ENCODE measurements at regions of chr7 and their contacts with region 1.

Region 1: DNA sequence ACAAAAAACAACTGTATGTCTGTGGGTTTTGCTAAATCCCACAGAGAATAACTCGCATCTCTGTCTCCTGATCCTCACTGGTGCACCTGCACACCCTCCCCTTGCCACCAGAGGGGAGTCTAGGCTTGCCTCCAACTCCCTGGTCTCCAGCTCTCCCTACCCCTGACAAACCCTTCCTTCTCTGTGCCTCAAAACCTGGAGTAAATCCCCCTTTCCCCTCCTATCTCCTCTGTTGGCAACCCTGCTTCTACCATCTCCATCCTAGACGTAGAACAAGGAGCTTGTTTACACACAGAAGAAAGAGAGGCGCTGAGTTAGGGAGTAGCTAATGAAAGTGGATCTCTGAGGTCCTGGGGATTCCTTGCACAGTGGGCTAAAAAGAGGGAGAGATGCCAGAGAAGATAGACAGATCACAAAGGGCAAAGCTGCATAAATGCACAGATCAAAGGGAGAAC is 6.0 kb downstream of the MBLAC1 start:
- DNase-seq: no peak
- ATAC-seq: peak; percentile 87
- H3K4me3 ChIP-seq: no peak overlapping the region
- H3K27ac ChIP-seq: no peak overlapping the region
- H3K4me1 ChIP-seq: peaks cover 11% of the 10 kb centered on the region
- H3K27me3 ChIP-seq: no peaks in the 10 kb centered on the region
- CTCF ChIP-seq: peak; percentile 96 to 97 (median 97); a peak in 5 of 6 replicates
- EP300 ChIP-seq: no peak
- POLR2A ChIP-seq: no peak
- RAD21 ChIP-seq: peak; percentile 96

Region 2: DNA sequence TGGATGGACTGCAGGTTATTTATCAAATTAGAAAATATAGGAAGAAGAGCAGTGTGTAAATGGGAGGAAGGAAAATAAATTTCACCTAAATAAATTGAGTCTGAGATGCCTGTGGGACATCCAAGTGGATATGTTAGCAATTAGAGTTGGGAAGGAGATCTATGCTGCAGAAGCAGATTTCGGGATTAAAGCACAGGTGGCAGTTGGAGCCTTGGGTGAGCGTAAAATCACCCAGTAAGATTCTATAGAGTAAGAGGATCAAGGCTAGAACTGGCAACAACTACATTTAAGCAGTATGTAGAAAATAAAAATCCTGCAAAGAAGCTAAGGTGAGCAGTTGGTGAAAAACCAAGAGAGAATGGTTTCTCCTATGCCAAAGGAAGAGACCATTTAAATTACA is 221.7 kb before region 1 on chr7:
- CTCF ChIA-PET with region 1: interaction called, 20 read pairs
- POLR2A ChIA-PET with region 1: interaction called, 5 read pairs
- RAD21 ChIA-PET with region 1: interaction called, 24 read pairs
- SMC1A ChIA-PET with region 1: interaction called, 8 read pairs
- in situ Hi-C with region 1: no loop called
- intact Hi-C with region 1: loop called (anchors 5 kb)
- DNase-seq: no peak
- ATAC-seq: no peak
- H3K4me3 ChIP-seq: no peak overlapping the region
- H3K27ac ChIP-seq: no peak overlapping the region
- H3K4me1 ChIP-seq: no peaks in the 10 kb centered on the region
- H3K27me3 ChIP-seq: no peaks in the 10 kb centered on the region
- CTCF ChIP-seq: no peak
- EP300 ChIP-seq: no peak
- POLR2A ChIP-seq: no peak
- RAD21 ChIP-seq: no peak

Region 3: GRCh38 chr7:99997545-99998137 is 135.1 kb before region 1 on chr7:
- CTCF ChIA-PET with region 1: interaction called, 95 read pairs
- POLR2A ChIA-PET with region 1: no interaction called
- RAD21 ChIA-PET with region 1: interaction called, 31 read pairs
- SMC1A ChIA-PET with region 1: interaction called, 17 read pairs
- in situ Hi-C with region 1: no loop called
- intact Hi-C with region 1: loop called (anchors 5 kb)
- DNase-seq: no peak
- ATAC-seq: peak; percentile 91
- H3K4me3 ChIP-seq: peak overlapping the region; percentile 51; the same call in 1 of the 2 replicates
- H3K27ac ChIP-seq: no peak overlapping the region
- H3K4me1 ChIP-seq: peaks cover 12% of the 10 kb centered on the region; the same call in 1 of the 2 replicates
- H3K27me3 ChIP-seq: no peaks in the 10 kb centered on the region; a peak in 1 of 4 replicates
- CTCF ChIP-seq: peak; percentile 14 to 24 (median 15); a peak in 2 of 6 replicates
- EP300 ChIP-seq: no peak
- POLR2A ChIP-seq: peak; percentile 85
- RAD21 ChIP-seq: no peak

Region 4: DNA sequence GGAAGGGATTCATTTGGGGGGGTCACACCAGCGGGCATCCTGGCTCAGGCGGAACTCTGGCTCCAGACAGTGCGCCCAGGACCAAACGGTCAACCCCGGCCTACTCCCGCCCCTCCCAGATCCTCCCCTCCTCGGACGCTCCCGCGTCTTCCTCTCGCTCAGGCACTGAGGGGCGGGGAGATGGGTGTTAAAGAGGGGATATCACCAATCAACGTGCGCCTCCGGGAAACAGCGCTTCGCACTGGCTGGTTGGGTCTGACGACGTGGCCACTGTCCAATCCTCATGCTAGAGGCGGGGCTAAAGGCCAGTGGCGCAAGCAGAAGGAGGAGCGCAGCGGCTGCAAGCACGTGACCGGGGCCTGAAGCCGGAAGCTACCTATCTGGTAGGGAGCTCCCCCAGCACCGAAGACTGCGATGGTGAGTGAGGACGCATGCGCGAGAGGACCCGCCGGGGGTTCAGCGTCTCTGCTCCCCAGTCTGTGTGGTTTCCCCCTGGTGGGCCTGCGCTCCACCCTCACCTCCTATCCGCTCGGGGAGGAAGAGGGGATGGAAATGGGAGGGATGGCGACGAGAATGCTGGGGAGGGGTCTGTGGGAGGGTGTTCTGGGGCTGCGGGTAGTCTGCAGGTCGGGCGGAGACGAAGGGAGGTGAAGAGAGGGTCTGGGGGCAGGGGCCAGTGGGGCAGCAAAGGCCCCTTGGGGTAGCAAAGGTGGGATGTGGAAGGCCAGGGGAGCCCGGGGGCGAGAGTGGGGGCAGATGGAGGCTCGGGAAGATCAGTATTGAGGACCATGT is 16.0 kb after region 1 on chr7 and contains the start of gene LAMTOR4:
- CTCF ChIA-PET with region 1: interaction called, 43 read pairs
- POLR2A ChIA-PET with region 1: interaction called, 22 read pairs
- RAD21 ChIA-PET with region 1: interaction called, 17 read pairs
- SMC1A ChIA-PET with region 1: interaction called, 12 read pairs
- in situ Hi-C with region 1: no loop called
- intact Hi-C with region 1: no loop called
- DNase-seq: peak; percentile 100
- ATAC-seq: peak; percentile 99
- H3K4me3 ChIP-seq: peak within 1 kb of the TSS; percentile 99
- H3K27ac ChIP-seq: peak within 1 kb of the TSS; percentile 86
- H3K4me1 ChIP-seq: peaks cover 5% of the 10 kb centered on the region; the same call in 1 of the 2 replicates
- H3K27me3 ChIP-seq: no peaks in the 10 kb centered on the region
- CTCF ChIP-seq: 0 out of 6 replicates have a peak, but pooled peaks of 1 of the 3 experiments have one; percentile 13
- EP300 ChIP-seq: peak in 1 of 2 experiments; percentile 14; a peak in 1 of 4 replicates
- POLR2A ChIP-seq: peak; percentile 91
- RAD21 ChIP-seq: no peak
- polyA plus RNA-seq, gene LAMTOR4: 188 to 262 TPM

Region 5: GRCh38 chr7:100215895-100216294 is 83.2 kb after region 1 on chr7:
- CTCF ChIA-PET with region 1: interaction called, 107 read pairs
- POLR2A ChIA-PET with region 1: interaction called, 7 read pairs
- RAD21 ChIA-PET with region 1: interaction called, 49 read pairs
- SMC1A ChIA-PET with region 1: interaction called, 41 read pairs
- in situ Hi-C with region 1: no loop called
- intact Hi-C with region 1: loop called (anchors 1 kb)
- DNase-seq: no peak
- ATAC-seq: no peak
- H3K4me3 ChIP-seq: no peak overlapping the region
- H3K27ac ChIP-seq: no peak overlapping the region
- H3K4me1 ChIP-seq: peaks cover 64% of the 10 kb centered on the region
- H3K27me3 ChIP-seq: no peaks in the 10 kb centered on the region
- CTCF ChIP-seq: no peak
- EP300 ChIP-seq: no peak
- POLR2A ChIP-seq: no peak
- RAD21 ChIP-seq: no peak

Region 6: GRCh38 chr7:100407285-100408180 is 274.8 kb after region 1 on chr7:
- CTCF ChIA-PET with region 1: interaction called, 49 read pairs
- POLR2A ChIA-PET with region 1: no interaction called
- RAD21 ChIA-PET with region 1: interaction called, 28 read pairs
- SMC1A ChIA-PET with region 1: interaction called, 30 read pairs
- in situ Hi-C with region 1: loop called (anchors 5 kb)
- intact Hi-C with region 1: loop called (anchors 5 kb)
- DNase-seq: peak; percentile 66
- ATAC-seq: peak; percentile 98
- H3K4me3 ChIP-seq: no peak overlapping the region
- H3K27ac ChIP-seq: no peak overlapping the region
- H3K4me1 ChIP-seq: peaks cover 7% of the 10 kb centered on the region
- H3K27me3 ChIP-seq: no peaks in the 10 kb centered on the region
- CTCF ChIP-seq: peak; percentile 69 to 82 (median 71)
- EP300 ChIP-seq: no peak
- POLR2A ChIP-seq: no peak
- RAD21 ChIP-seq: peak; percentile 87